H1 (cell line): ENCODE measurements at regions of chr2 and their contacts with region 1.

Region 1: DNA sequence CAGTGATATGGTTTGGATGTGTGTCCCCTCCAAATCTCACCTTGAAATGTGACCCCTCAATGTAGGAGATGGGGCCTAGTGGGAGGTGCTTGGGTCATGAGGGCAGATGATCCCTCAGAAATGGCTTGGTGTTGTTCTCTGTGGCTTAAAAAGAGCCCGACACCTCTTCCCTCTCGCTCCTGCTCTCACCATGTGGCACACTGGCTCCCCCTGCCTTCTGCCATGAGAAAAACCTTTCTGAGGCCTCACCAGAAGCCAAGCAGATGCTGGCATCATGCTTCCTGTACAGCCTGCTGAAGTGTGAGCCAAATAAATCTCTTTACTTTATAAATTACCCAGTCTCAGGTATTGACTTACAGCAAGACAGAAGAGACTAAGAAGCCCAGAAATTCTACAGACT is 357.1 kb downstream of the NRXN1 start:
- DNase-seq: peak; percentile 29 to 65
- H3K4me3 ChIP-seq: no peak overlapping the region
- H3K27ac ChIP-seq: no peak overlapping the region
- H3K4me1 ChIP-seq: no peaks in the 10 kb centered on the region
- H3K27me3 ChIP-seq: no peaks in the 10 kb centered on the region
- CTCF ChIP-seq: peak; percentile 63 to 68 (median 64)
- EP300 ChIP-seq: no peak
- POLR2A ChIP-seq: no peak
- RAD21 ChIP-seq: peak; percentile 70 to 79

Region 2: GRCh38 chr2:50529600-50530218 is 145.2 kb before region 1 on chr2:
- CTCF ChIA-PET with region 1: interaction called, 11 read pairs
- POLR2A ChIA-PET with region 1: no interaction called
- DNase-seq: no peak
- H3K4me3 ChIP-seq: no peak overlapping the region
- H3K27ac ChIP-seq: no peak overlapping the region
- H3K4me1 ChIP-seq: no peaks in the 10 kb centered on the region
- H3K27me3 ChIP-seq: no peaks in the 10 kb centered on the region
- CTCF ChIP-seq: peak in 2 of 3 experiments; percentile 52 to 63; a peak in 2 of 4 replicates
- EP300 ChIP-seq: no peak
- POLR2A ChIP-seq: no peak
- RAD21 ChIP-seq: peak; percentile 74 to 76

Region 3: DNA sequence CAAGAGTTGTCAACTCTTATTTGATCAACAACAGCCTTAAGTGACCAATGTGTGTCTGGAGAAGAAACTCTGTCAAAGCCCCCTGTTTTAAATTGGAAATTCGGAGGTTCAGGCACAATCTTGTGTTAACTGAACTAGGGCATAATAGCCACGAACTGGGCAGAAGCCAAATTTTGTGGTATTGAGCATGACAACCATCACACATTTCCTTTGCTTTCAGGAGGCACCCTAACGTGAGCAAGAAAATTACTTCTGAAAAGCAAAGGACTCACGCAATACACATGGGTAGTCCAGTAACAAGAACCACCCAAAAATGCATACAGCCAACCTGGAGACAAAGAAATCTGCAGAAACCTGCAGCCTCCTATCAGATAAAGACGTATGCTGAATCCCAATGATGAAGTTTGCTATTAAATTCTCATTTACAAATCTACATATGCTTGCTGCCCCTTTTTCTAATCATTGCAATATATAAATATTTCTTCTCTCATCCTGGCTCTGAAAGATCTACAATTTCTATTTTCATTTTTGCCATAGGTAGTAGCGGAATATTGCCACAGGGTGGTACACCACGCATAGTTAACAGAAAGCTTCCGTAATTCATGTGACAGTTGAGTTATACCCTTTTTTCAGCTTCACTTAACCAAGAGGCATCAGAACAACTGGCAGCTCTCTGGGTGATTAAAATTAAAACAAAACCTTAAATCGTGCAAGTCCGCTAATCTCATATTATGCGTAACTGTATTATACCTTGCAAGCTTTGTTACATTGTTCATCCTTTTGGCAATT is 138.7 kb before region 1 on chr2:
- CTCF ChIA-PET with region 1: interaction called, 23 read pairs
- POLR2A ChIA-PET with region 1: no interaction called
- DNase-seq: no peak
- H3K4me3 ChIP-seq: no peak overlapping the region
- H3K27ac ChIP-seq: no peak overlapping the region
- H3K4me1 ChIP-seq: no peaks in the 10 kb centered on the region
- H3K27me3 ChIP-seq: no peaks in the 10 kb centered on the region
- CTCF ChIP-seq: peak in 2 of 3 experiments; percentile 45 to 55; a peak in 2 of 4 replicates
- EP300 ChIP-seq: no peak
- POLR2A ChIP-seq: no peak
- RAD21 ChIP-seq: peak; percentile 84 to 85

Region 4: DNA sequence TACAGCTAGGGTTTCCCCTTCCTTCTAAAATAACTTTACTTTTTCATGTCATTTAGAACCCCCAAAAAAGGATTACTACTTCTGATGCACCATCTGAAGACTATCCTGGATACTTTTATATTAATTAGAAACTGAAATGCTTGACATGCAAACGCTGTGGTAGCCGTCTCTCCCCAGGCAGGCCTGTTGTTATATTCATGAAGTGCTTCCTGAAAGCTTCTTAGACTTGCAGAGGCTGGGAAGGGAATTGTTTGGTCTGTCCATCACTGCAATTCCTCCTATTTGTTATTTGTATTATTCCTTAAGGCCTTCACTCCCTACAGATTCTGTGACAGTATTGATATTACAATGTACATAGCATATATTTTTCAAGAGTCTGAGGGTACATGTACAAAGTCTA is 13.2 kb before region 1 on chr2:
- CTCF ChIA-PET with region 1: interaction called, 14 read pairs
- POLR2A ChIA-PET with region 1: no interaction called
- DNase-seq: no peak
- H3K4me3 ChIP-seq: no peak overlapping the region
- H3K27ac ChIP-seq: no peak overlapping the region
- H3K4me1 ChIP-seq: no peaks in the 10 kb centered on the region
- H3K27me3 ChIP-seq: no peaks in the 10 kb centered on the region
- CTCF ChIP-seq: no peak
- EP300 ChIP-seq: no peak
- POLR2A ChIP-seq: no peak
- RAD21 ChIP-seq: no peak

Region 5: DNA sequence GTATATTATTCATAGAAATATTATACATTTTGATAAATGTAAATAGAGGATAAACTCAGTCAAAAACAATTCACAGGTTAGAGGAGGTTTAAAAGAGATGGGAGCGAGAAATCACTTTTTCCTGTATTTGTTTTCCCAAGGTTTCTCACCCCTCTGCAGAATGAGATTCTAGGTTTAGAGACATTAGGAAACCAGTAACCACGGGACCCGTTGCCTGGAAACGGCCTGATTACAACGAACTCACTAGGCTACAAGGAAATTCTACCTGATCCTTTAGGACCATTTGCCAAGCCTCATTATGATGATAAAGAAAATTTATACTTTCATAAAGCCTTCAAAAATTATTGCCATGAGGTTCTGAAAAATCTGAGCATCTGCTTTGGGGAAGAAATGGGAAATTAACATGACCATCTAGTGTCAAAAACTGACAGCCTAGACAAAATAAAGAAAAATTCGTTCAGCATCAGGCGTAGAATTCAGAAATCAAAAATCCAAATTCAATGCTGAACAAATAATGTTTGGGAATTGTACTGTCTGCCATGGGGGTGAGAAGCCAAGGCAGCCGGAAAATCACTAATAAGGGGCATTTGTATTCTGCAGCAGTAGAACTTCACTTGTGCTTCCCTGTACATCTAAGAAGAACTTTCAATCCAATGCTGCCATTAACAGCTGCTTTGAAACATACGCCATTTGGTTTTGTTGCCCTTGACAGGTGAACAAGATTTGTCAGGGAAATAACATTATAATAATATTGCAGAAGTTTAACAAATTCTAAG is 94.7 kb after region 1 on chr2:
- CTCF ChIA-PET with region 1: no interaction called
- POLR2A ChIA-PET with region 1: no interaction called
- DNase-seq: no peak
- H3K4me3 ChIP-seq: no peak overlapping the region
- H3K27ac ChIP-seq: no peak overlapping the region
- H3K4me1 ChIP-seq: peaks cover 0 to 9% (median 7%) of the 10 kb centered on the region in 4 experiments; a peak in 4 of 7 replicates
- H3K27me3 ChIP-seq: no peaks in the 10 kb centered on the region
- CTCF ChIP-seq: no peak
- EP300 ChIP-seq: no peak
- POLR2A ChIP-seq: no peak
- RAD21 ChIP-seq: no peak

Region 6: DNA sequence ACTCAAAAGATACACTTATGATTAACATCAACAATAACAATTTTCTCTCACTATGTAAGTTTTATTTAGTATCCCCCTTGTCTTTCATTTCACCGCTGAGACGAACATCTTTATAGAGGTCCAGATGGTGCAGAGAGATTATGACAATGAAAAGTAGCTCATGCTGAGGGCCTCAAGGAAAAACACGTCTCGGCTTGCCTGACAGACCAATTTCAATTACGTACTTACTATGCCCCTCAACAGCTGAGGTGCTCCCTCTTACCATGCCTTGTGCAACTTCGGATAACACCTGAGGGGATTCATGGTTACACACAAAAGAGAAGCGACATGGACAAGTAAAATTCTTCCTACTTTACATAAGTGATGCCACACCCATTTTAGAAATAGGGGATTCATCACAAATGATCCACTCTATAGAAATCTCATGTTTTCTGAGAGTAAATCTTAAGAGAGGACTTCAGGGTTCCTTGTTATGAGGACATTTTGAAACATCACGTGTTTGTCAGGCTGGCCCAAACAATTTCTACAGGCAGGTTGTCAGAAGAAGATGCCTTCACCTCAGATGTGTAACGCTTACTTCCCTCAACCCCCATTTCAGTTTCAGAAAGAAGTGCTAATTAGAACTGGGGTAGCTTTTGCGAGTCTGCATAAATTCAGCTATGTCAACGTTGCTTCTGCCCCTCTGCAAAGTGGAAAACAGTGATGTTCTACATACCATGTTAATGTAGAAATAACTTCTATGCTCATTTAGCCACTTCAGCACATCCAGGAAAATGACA is 165.7 kb after region 1 on chr2:
- CTCF ChIA-PET with region 1: no interaction called
- POLR2A ChIA-PET with region 1: no interaction called
- DNase-seq: no peak
- H3K4me3 ChIP-seq: no peak overlapping the region
- H3K27ac ChIP-seq: no peak overlapping the region
- H3K4me1 ChIP-seq: peaks cover 0 to 4% (median 3%) of the 10 kb centered on the region in 4 experiments; a peak in 3 of 7 replicates
- H3K27me3 ChIP-seq: no peaks in the 10 kb centered on the region
- CTCF ChIP-seq: no peak
- EP300 ChIP-seq: no peak
- POLR2A ChIP-seq: no peak
- RAD21 ChIP-seq: no peak